ENCODE measurements at regions of chr3 and their contacts with region 1.

Region 1: DNA sequence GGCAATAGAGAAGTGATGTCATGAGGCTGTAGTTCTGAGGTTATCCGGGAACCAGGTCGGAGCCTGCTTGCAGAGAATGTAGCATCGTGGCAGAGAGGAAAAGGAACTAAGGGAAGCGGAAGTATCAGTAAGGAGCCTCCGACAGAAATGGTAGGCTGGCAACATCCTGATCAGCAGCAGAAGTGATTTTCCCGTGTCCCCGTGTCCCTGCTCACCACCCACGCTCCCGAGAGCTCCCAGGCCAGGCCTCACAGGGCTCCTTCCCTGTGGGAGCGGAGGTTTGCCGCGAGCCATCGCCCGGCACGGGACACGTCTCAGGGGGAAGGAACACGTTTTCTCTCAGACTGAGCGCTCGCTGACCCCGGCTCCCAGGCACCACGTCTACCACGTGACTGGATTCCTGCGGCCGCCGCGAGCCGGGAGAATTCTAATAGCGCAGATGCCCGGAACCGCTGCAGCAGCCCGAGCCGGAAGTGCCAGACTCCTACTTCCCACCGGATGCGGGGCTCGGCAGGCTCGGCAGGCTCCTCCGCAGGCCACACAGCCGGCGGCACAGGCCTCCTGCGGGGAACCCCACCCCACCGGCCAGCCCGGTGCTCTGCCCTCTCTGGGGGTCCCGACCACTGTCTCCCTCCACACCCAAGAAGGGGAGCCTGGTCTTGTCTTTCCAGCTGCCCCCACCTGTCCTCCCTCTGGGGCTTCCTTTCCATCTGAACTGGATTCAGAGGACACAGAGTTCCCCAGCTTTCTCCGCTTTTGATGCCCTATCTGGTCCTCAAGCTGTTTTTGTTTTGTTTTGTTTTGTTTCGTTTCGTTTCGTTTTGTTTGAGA is 99.3 kb downstream of the BDH1 start:
- DNase-seq: peak; percentile 85 to 86
- ATAC-seq: peak; percentile 86 to 97 (median 92)
- H3K4me3 ChIP-seq: peak overlapping the region; percentile 37 to 64 (median 60)
- H3K27ac ChIP-seq: peak overlapping the region in 9 of 10 donors; percentile 53 to 84 (median 76)
- H3K4me1 ChIP-seq: peaks cover 0 to 14% (median 7%) of the 10 kb centered on the region in 9 donors
- H3K27me3 ChIP-seq: no peaks in the 10 kb centered on the region
- CTCF ChIP-seq: no peak

Region 2: DNA sequence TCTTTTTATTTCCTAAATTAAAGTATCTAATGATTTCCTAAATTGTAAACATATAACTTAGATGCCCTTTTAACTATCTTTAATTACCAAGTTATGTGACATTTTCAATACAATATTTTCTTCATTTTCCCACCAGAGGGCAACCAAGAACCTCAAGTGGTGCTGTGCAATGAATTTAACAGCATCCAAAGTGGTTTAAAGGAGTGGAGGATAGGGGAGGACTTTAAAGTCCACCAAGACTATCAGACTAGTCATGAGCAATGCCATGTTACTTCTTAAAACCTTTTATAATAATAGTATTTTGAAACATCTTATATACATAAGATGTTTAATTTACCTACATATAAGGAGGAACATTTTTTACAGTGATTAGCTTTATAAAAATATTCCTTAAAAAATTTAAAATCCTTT is 232.4 kb before region 1 on chr3:
- intact Hi-C with region 1: loop called in 3 of 10 experiments (anchors 10 kb)
- DNase-seq: no peak
- ATAC-seq: peak in 3 of 8 donors; percentile 48 to 63 (median 61)
- H3K4me3 ChIP-seq: no peak overlapping the region
- H3K27ac ChIP-seq: no peak overlapping the region
- H3K4me1 ChIP-seq: peaks cover 0 to 59% (median 34%) of the 10 kb centered on the region in 9 donors
- H3K27me3 ChIP-seq: no peaks in the 10 kb centered on the region
- CTCF ChIP-seq: peak; percentile 7 to 69 (median 60)

Region 3: GRCh38 chr3:197256836-197257444 is 199.5 kb before region 1 on chr3:
- intact Hi-C with region 1: loop called in 8 of 10 experiments (anchors 1 to 10 kb)
- DNase-seq: peak in 1 of 2 donors; percentile 28
- ATAC-seq: no peak
- H3K4me3 ChIP-seq: no peak overlapping the region
- H3K27ac ChIP-seq: no peak overlapping the region
- H3K4me1 ChIP-seq: peaks cover 0 to 49% (median 21%) of the 10 kb centered on the region in 9 donors
- H3K27me3 ChIP-seq: no peaks in the 10 kb centered on the region
- CTCF ChIP-seq: peak; percentile 59 to 84 (median 72)

Region 4: GRCh38 chr3:197298341-197298857 is 158.1 kb before region 1 on chr3 and contains the start of gene DLG1:
- intact Hi-C with region 1: loop called in 2 of 10 experiments (anchors 5 to 10 kb)
- DNase-seq: peak; percentile 88
- ATAC-seq: peak; percentile 79 to 94 (median 92)
- H3K4me3 ChIP-seq: peak within 1 kb of the TSS; percentile 78 to 100 (median 92)
- H3K27ac ChIP-seq: peak within 1 kb of the TSS; percentile 80 to 96 (median 94)
- H3K4me1 ChIP-seq: peaks cover 5 to 43% (median 24%) of the 10 kb centered on the region in 9 donors
- H3K27me3 ChIP-seq: no peaks in the 10 kb centered on the region
- CTCF ChIP-seq: no peak
- total RNA-seq, gene DLG1: 29.0 to 97.4 (median 57.6) TPM

Region 5: GRCh38 chr3:197354319-197355001 is 102.0 kb before region 1 on chr3:
- intact Hi-C with region 1: loop called in 1 of 10 experiments (anchors 10 kb)
- DNase-seq: peak; percentile 58 to 59
- ATAC-seq: peak in 7 of 8 donors; percentile 11 to 67 (median 44)
- H3K4me3 ChIP-seq: peak overlapping the region in 5 of 10 donors; percentile 5 to 34 (median 25)
- H3K27ac ChIP-seq: peak overlapping the region in 8 of 10 donors; percentile 22 to 85 (median 65)
- H3K4me1 ChIP-seq: peaks cover 3 to 53% (median 27%) of the 10 kb centered on the region in 9 donors
- H3K27me3 ChIP-seq: no peaks in the 10 kb centered on the region
- CTCF ChIP-seq: no peak